Dendritic cell treated with granulocyte-macrophage colony-stimulating factor and Interleukin-4, amounts not matched to agents 40 ng/mL and 50 ng/mL, for 4 days (primary cell): ENCODE measurements at regions of chr12 and their contacts with region 1.

Region 1: GRCh38 chr12:121773011-121773777 is 20.3 kb downstream of the RHOF start:
- H3K4me3 Mint-ChIP-seq: no peak overlapping the region
- H3K27ac Mint-ChIP-seq: no peak overlapping the region
- H3K4me1 Mint-ChIP-seq: peaks cover 5% of the 10 kb centered on the region
- H3K27me3 Mint-ChIP-seq: no peaks in the 10 kb centered on the region

Region 2: DNA sequence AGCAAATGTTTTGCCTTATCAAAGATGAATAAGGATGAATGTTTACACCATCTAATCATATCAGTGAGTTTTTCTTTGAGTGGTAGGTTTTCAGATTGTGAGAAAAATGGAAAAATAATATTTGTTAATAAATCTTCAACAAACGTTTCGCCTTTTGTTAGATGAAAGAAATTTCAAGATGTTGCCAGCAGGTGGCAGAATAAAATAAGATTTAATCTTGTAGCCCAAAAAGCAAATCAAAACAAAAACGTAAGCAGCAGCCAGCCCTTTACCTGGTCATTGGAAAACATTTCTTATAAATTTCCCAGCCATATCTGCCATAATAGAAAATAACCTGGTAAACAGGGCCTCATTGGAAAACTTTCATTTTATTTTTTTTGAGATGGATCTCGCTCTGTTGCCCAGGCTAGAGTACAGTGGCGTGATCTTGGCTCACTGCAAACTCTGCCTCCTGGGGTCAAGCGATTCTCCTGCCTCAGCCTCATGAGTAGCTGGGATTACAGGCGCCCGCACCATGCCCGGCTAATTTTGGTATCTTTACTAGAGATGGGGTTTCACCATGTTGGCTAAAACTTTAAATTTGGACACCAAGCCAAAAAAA is 76.0 kb before region 1 on chr12:
- intact Hi-C with region 1: loop called (anchors 1 kb)
- H3K4me3 Mint-ChIP-seq: no peak overlapping the region
- H3K27ac Mint-ChIP-seq: no peak overlapping the region
- H3K4me1 Mint-ChIP-seq: no peaks in the 10 kb centered on the region
- H3K27me3 Mint-ChIP-seq: no peaks in the 10 kb centered on the region

Region 3: DNA sequence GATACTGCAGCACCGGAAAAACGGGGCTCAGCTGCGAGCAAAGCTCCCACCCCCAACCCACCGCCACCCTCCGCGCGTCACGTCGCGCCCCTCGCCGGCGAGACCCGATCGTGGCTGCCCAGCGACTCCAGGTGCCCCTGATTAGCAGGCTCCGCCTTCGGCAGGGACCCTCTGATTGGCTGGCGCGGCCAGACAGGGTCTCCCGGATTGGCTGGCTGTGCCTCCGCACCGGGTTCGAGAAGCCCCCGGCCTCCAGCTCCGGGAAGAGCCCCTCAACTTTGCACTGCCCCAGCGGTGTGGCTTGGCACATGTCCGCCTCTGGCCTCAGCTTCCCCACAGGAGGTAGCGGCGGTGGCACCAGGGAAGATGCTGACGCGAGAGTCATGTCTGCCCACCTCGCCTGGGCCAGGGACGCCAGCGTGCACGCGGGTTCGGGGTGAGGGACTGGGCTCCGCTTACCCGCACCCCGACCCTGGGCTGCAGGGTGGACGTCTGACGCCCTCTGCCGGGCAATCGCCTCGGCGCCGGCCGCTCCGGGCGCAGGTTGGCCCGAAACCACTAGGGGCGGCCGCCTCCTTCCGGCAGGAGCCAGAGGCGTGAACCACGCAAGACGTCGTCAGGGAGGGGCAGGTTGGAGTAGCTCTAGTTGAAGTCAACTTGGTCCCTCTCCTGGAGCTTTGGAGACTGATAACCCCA is 20.8 kb after region 1 on chr12:
- intact Hi-C with region 1: loop called (anchors 1 kb)
- H3K4me3 Mint-ChIP-seq: peak overlapping the region; percentile 78
- H3K27ac Mint-ChIP-seq: peak overlapping the region; percentile 89
- H3K4me1 Mint-ChIP-seq: peaks cover 84% of the 10 kb centered on the region
- H3K27me3 Mint-ChIP-seq: no peaks in the 10 kb centered on the region

Region 4: DNA sequence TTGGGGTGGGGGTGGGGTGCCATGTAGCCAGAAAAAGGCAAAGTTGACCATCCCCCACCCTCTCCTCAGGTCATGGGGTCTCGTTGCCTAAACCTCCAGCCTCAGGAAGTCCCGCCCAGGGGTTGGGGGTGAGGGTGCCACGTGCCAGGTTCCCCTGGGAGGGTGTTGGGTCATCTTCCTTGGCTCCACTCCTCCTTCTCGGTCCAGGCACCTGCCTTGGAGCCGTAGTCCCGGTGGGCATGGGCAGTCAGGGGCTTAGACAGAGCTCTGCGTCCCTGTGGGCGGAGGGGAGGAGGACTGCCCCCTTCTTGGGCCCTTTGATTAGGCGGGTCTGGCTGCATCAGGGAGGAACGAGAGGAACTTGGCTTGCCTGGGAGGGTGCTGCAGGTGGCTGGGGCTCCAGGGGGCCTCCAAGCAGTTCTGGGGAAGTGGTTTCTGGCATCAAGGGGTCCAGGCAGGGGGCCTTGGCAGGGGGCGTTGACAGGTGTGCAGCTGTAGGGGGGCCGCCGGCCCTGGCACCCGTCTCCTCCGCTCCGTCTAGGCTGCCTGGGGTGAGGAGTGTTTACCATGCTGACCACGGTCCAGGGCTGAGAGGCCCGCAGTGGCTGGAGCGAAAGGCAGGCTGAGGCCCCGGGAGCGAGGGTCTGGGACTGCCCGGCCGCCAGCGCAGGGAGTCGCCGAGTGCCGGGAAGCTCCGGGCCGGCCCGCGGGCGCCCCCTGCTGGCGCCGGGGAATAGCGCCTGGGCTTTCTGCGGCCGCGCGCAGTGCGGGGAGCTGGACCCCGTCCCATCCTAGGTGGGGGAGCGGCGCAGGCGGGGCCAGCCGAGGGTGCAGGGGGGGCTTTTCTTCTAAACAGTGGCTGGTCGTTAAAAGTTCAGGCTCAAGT is 38.5 kb after region 1 on chr12:
- intact Hi-C with region 1: loop called (anchors 1 kb)
- H3K4me3 Mint-ChIP-seq: peak overlapping the region; percentile 82
- H3K27ac Mint-ChIP-seq: peak overlapping the region; percentile 76
- H3K4me1 Mint-ChIP-seq: peaks cover 69% of the 10 kb centered on the region
- H3K27me3 Mint-ChIP-seq: no peaks in the 10 kb centered on the region